Activated CD4-positive, alpha-beta T cell treated with anti-CD3 and anti-CD28 coated beads, Interleukin-2, amount 10 ng/mL, durations not matched to agents 24 days and 14 days (primary cell): ENCODE measurements at regions of chr17 and their contacts with region 1.

Region 1: GRCh38 chr17:40615295-40615988 is 32.2 kb downstream of the SMARCE1 start:
- DNase-seq: peak; percentile 81
- H3K4me3 Mint-ChIP-seq: peak overlapping the region; percentile 47
- H3K27ac Mint-ChIP-seq: peak overlapping the region; percentile 85
- H3K4me1 Mint-ChIP-seq: peaks cover 67% of the 10 kb centered on the region
- H3K27me3 Mint-ChIP-seq: no peaks in the 10 kb centered on the region

Region 2: GRCh38 chr17:40564883-40565768 is 50.3 kb before region 1 on chr17 and contains the start of gene CCR7:
- intact Hi-C with region 1: loop called (anchors 1 kb)
- DNase-seq: peak; percentile 93
- H3K4me3 Mint-ChIP-seq: peak within 1 kb of the TSS; percentile 95
- H3K27ac Mint-ChIP-seq: peak within 1 kb of the TSS; percentile 100
- H3K4me1 Mint-ChIP-seq: peaks cover 37% of the 10 kb centered on the region
- H3K27me3 Mint-ChIP-seq: no peaks in the 10 kb centered on the region
- total RNA-seq, gene CCR7: 217 and 220 TPM in 2 replicates

Region 3: GRCh38 chr17:40582328-40582901 is 33.0 kb before region 1 on chr17:
- intact Hi-C with region 1: no loop called
- DNase-seq: peak; percentile 90
- H3K4me3 Mint-ChIP-seq: peak overlapping the region; percentile 62
- H3K27ac Mint-ChIP-seq: peak overlapping the region; percentile 89
- H3K4me1 Mint-ChIP-seq: peaks cover 72% of the 10 kb centered on the region
- H3K27me3 Mint-ChIP-seq: no peaks in the 10 kb centered on the region

Region 4: GRCh38 chr17:40791787-40792436 is 176.5 kb after region 1 on chr17:
- intact Hi-C with region 1: loop called (anchors 1 kb)
- DNase-seq: no peak
- H3K4me3 Mint-ChIP-seq: no peak overlapping the region
- H3K27ac Mint-ChIP-seq: no peak overlapping the region
- H3K4me1 Mint-ChIP-seq: peaks cover 2% of the 10 kb centered on the region
- H3K27me3 Mint-ChIP-seq: peaks cover 32% of the 10 kb centered on the region